GM12878 (cell line): ENCODE measurements at regions of chr1 and their contacts with region 1.

Region 1: GRCh38 chr1:206734499-206735142 is 36.0 kb upstream of the IL19 start:
- DNase-seq: no peak
- ATAC-seq: peak; percentile 45
- H3K4me3 ChIP-seq: no peak overlapping the region
- H3K27ac ChIP-seq: no peak overlapping the region; the same call in 1 of the 2 replicates
- H3K4me1 ChIP-seq: peaks cover 28% of the 10 kb centered on the region
- H3K27me3 ChIP-seq: no peaks in the 10 kb centered on the region
- CTCF ChIP-seq: peak; percentile 84 to 98 (median 96)
- EP300 ChIP-seq: no peak
- POLR2A ChIP-seq: no peak; the same call in 1 of the 2 replicates
- RAD21 ChIP-seq: peak; percentile 98

Region 2: GRCh38 chr1:206030714-206031113 is 703.9 kb before region 1 on chr1:
- CTCF ChIA-PET with region 1: no interaction called
- POLR2A ChIA-PET with region 1: no interaction called
- RAD21 ChIA-PET with region 1: no interaction called
- SMC1A ChIA-PET with region 1: no interaction called
- in situ Hi-C with region 1: no loop called
- intact Hi-C with region 1: no loop called
- DNase-seq: peak; percentile 66
- ATAC-seq: peak; percentile 99
- H3K4me3 ChIP-seq: no peak overlapping the region
- H3K27ac ChIP-seq: no peak overlapping the region
- H3K4me1 ChIP-seq: peaks cover 15% of the 10 kb centered on the region
- H3K27me3 ChIP-seq: no peaks in the 10 kb centered on the region
- CTCF ChIP-seq: peak; percentile 85 to 95 (median 95)
- EP300 ChIP-seq: no peak
- POLR2A ChIP-seq: no peak
- RAD21 ChIP-seq: peak; percentile 92

Region 3: GRCh38 chr1:206635080-206635977 is 99.3 kb before region 1 on chr1 and contains the start of gene DYRK3:
- CTCF ChIA-PET with region 1: interaction called, 29 read pairs
- POLR2A ChIA-PET with region 1: no interaction called
- RAD21 ChIA-PET with region 1: interaction called, 15 read pairs
- SMC1A ChIA-PET with region 1: interaction called, 8 read pairs
- in situ Hi-C with region 1: no loop called
- intact Hi-C with region 1: loop called (anchors 10 kb)
- DNase-seq: peak; percentile 71
- ATAC-seq: peak; percentile 92
- H3K4me3 ChIP-seq: peak within 1 kb of the TSS; percentile 94
- H3K27ac ChIP-seq: peak within 1 kb of the TSS; percentile 62
- H3K4me1 ChIP-seq: peaks cover 26% of the 10 kb centered on the region
- H3K27me3 ChIP-seq: no peaks in the 10 kb centered on the region
- CTCF ChIP-seq: 0 out of 6 replicates have a peak, but pooled peaks of 1 of the 3 experiments have one; percentile 5
- EP300 ChIP-seq: 0 out of 4 replicates have a peak, but pooled peaks of 1 of the 2 experiments have one; percentile 17
- POLR2A ChIP-seq: peak; percentile 94
- RAD21 ChIP-seq: no peak
- polyA plus RNA-seq, gene DYRK3: 1.6 to 2.8 TPM

Region 4: GRCh38 chr1:206761159-206761768 is 26.6 kb after region 1 on chr1:
- CTCF ChIA-PET with region 1: interaction called, 110 read pairs
- POLR2A ChIA-PET with region 1: interaction called, 31 read pairs
- RAD21 ChIA-PET with region 1: interaction called, 227 read pairs
- SMC1A ChIA-PET with region 1: interaction called, 264 read pairs
- in situ Hi-C with region 1: no loop called
- intact Hi-C with region 1: loop called (anchors 1 kb)
- DNase-seq: no peak
- ATAC-seq: no peak
- H3K4me3 ChIP-seq: no peak overlapping the region
- H3K27ac ChIP-seq: no peak overlapping the region
- H3K4me1 ChIP-seq: peaks cover 3% of the 10 kb centered on the region
- H3K27me3 ChIP-seq: no peaks in the 10 kb centered on the region
- CTCF ChIP-seq: no peak
- EP300 ChIP-seq: no peak
- POLR2A ChIP-seq: no peak
- RAD21 ChIP-seq: no peak

Region 5: DNA sequence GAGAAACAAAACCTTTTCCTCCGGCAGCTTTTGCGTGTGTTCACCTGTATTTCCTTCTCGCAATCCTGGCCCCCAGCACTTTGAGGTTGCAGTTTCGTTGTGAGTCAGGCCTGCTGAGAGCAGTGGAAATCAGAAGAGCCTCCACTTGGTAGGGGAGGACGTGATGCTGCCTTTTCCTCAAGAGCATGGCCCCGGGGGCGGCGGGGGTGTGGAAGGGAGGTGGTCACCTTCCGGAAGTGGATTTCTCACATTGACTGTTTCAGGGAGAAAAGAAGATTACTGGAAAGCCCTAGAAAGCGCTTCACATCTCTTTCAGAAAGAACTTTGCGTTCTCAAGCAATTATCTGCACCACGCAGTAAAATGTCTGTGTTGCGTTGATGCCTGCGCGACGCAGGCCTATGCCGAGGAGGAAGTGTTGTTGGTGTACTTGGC is 49.9 kb after region 1 on chr1:
- CTCF ChIA-PET with region 1: interaction called, 8 read pairs
- POLR2A ChIA-PET with region 1: interaction called, 5 read pairs
- RAD21 ChIA-PET with region 1: interaction called, 16 read pairs
- SMC1A ChIA-PET with region 1: interaction called, 15 read pairs
- in situ Hi-C with region 1: no loop called
- intact Hi-C with region 1: loop called (anchors 1 kb)
- DNase-seq: no peak
- ATAC-seq: peak; percentile 81
- H3K4me3 ChIP-seq: peak overlapping the region; percentile 38; the same call in 1 of the 2 replicates
- H3K27ac ChIP-seq: peak overlapping the region; percentile 85
- H3K4me1 ChIP-seq: peaks cover 49% of the 10 kb centered on the region
- H3K27me3 ChIP-seq: no peaks in the 10 kb centered on the region
- CTCF ChIP-seq: no peak
- EP300 ChIP-seq: peak; percentile 69 to 89; a peak in 3 of 4 replicates
- POLR2A ChIP-seq: peak; percentile 55
- RAD21 ChIP-seq: peak; percentile 19; the same call in 1 of the 2 replicates

Region 6: GRCh38 chr1:206803221-206803730 is 68.7 kb after region 1 on chr1:
- CTCF ChIA-PET with region 1: interaction called, 805 read pairs
- POLR2A ChIA-PET with region 1: interaction called, 24 read pairs
- RAD21 ChIA-PET with region 1: interaction called, 297 read pairs
- SMC1A ChIA-PET with region 1: interaction called, 417 read pairs
- in situ Hi-C with region 1: loop called (anchors 5 kb)
- intact Hi-C with region 1: loop called (anchors 1 kb)
- DNase-seq: peak; percentile 98
- ATAC-seq: peak; percentile 97
- H3K4me3 ChIP-seq: no peak overlapping the region
- H3K27ac ChIP-seq: peak overlapping the region; percentile 55
- H3K4me1 ChIP-seq: peaks cover 20% of the 10 kb centered on the region
- H3K27me3 ChIP-seq: no peaks in the 10 kb centered on the region
- CTCF ChIP-seq: no peak
- EP300 ChIP-seq: peak; percentile 98 to 99
- POLR2A ChIP-seq: peak; percentile 26; the same call in 1 of the 2 replicates
- RAD21 ChIP-seq: peak; percentile 9; the same call in 1 of the 2 replicates

Region 7: DNA sequence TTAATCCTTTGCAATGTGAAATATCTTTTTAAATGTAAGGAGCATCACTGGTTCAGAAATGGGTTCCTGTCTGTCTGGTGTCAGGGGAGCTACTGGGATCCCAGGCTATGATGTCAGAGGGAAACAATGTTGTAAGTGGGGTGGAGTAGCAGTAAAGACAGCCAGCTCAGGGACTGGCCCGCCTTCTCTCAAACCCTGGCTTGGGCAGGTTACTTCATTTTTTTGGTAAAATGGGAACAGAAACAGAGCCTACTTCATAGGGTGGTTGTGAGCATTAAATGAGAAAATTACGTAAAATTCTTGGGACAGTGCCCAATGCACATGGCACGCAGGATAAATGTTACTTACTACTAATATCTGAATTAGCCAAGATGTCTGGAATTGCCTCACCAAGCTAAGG is 100.1 kb after region 1 on chr1:
- CTCF ChIA-PET with region 1: interaction called, 3 read pairs
- POLR2A ChIA-PET with region 1: interaction called, 3 read pairs
- RAD21 ChIA-PET with region 1: interaction called, 12 read pairs
- SMC1A ChIA-PET with region 1: interaction called, 6 read pairs
- in situ Hi-C with region 1: no loop called
- intact Hi-C with region 1: no loop called
- DNase-seq: no peak
- ATAC-seq: peak; percentile 41; the same call in 2 of the 3 replicates
- H3K4me3 ChIP-seq: no peak overlapping the region
- H3K27ac ChIP-seq: no peak overlapping the region
- H3K4me1 ChIP-seq: peaks cover 32% of the 10 kb centered on the region
- H3K27me3 ChIP-seq: no peaks in the 10 kb centered on the region; a peak in 1 of 4 replicates
- CTCF ChIP-seq: no peak
- EP300 ChIP-seq: no peak
- POLR2A ChIP-seq: no peak
- RAD21 ChIP-seq: no peak

Region 8: DNA sequence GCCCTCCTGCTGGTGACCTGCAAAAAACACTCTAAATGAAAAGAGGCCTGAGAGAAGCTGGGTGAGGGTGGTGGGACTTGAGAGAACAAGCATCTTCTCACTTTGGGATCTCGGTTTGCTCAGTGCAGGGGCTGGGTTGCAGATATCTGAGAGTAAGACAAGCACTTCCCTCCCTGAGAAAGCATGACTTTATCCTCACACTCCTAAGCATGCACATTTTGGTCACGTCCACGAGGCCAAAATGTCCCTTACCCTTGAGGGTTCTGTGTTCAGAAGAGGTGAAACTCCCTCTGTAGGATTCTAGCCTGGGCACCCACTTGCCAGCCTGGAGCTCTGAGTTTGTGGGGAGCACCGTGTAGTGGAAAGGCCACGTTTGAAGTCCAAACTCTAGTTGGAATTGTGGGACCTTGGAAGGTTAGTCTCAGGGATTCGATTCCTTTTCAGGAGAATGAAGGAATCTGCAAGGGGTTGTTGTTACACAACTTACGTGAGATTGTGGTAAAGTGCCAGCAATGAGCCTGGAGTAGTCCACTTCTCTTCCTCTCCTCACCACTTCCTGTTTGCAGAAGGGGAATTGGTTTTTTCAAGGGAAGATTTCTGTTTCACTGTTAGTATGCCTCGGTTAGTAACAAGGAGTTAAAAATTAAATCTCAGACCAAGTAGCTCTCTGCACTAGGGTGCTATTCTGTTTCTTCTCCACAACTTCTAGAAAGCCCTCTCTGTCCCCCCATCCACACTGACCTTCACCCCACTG is 232.7 kb after region 1 on chr1:
- CTCF ChIA-PET with region 1: interaction called, 12 read pairs
- POLR2A ChIA-PET with region 1: no interaction called
- RAD21 ChIA-PET with region 1: no interaction called
- SMC1A ChIA-PET with region 1: no interaction called
- in situ Hi-C with region 1: no loop called
- intact Hi-C with region 1: no loop called
- DNase-seq: peak; percentile 72
- ATAC-seq: peak; percentile 72
- H3K4me3 ChIP-seq: 0 out of 2 replicates have a peak overlapping the region, but pooled peaks have one; percentile 37
- H3K27ac ChIP-seq: peak overlapping the region; percentile 52
- H3K4me1 ChIP-seq: peaks cover 38% of the 10 kb centered on the region
- H3K27me3 ChIP-seq: no peaks in the 10 kb centered on the region
- CTCF ChIP-seq: no peak
- EP300 ChIP-seq: 0 out of 4 replicates have a peak, but pooled peaks of 1 of the 2 experiments have one; percentile 32
- POLR2A ChIP-seq: no peak
- RAD21 ChIP-seq: no peak